ENCODE measurements at regions of chr14 and their contacts with region 1.

Region 1: DNA sequence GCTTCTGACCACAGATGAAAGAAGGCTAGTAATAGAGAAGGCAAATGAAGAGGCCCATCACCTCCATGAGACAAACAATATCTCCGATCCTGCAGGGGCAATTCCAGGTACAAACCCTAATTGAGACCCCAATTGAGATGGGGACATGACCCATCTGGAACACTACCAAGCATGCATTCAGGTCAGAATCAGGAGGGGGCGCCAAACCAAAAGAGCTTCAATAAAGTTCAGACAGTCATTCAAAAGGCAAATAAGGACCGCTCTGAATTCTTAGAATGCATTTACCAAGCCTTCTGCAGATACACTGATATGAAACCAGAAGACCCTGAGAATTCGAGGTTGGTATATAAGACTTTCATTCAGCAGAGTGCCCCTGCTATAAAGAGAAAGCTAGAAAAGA is 10.2 kb upstream of the EDDM3B start:
- DNase-seq: peak; percentile 40 to 59 (median 42)
- ATAC-seq: peak; percentile 83
- H3K4me3 ChIP-seq: no peak overlapping the region
- H3K27ac ChIP-seq: no peak overlapping the region
- H3K4me1 ChIP-seq: no peaks in the 10 kb centered on the region; a peak in 2 of 5 replicates
- H3K27me3 ChIP-seq: no peaks in the 10 kb centered on the region
- CTCF ChIP-seq: peak; percentile 60 to 67 (median 64)
- EP300 ChIP-seq: no peak
- POLR2A ChIP-seq: no peak
- RAD21 ChIP-seq: peak; percentile 45 to 75

Region 2: GRCh38 chr14:20609215-20610001 is 148.6 kb before region 1 on chr14:
- CTCF ChIA-PET with region 1: no interaction called
- POLR2A ChIA-PET with region 1: no interaction called
- in situ Hi-C with region 1: no loop called
- intact Hi-C with region 1: no loop called
- DNase-seq: peak; percentile 59 to 86 (median 65)
- ATAC-seq: peak; percentile 12
- H3K4me3 ChIP-seq: peak overlapping the region; percentile 80
- H3K27ac ChIP-seq: peak overlapping the region; percentile 64
- H3K4me1 ChIP-seq: peaks cover 0 to 14% of the 10 kb centered on the region in 2 experiments; a peak in 2 of 5 replicates
- H3K27me3 ChIP-seq: no peaks in the 10 kb centered on the region
- CTCF ChIP-seq: peak; percentile 93 to 100 (median 99)
- EP300 ChIP-seq: peak; percentile 35
- POLR2A ChIP-seq: no peak
- RAD21 ChIP-seq: peak; percentile 96 to 97

Region 3: DNA sequence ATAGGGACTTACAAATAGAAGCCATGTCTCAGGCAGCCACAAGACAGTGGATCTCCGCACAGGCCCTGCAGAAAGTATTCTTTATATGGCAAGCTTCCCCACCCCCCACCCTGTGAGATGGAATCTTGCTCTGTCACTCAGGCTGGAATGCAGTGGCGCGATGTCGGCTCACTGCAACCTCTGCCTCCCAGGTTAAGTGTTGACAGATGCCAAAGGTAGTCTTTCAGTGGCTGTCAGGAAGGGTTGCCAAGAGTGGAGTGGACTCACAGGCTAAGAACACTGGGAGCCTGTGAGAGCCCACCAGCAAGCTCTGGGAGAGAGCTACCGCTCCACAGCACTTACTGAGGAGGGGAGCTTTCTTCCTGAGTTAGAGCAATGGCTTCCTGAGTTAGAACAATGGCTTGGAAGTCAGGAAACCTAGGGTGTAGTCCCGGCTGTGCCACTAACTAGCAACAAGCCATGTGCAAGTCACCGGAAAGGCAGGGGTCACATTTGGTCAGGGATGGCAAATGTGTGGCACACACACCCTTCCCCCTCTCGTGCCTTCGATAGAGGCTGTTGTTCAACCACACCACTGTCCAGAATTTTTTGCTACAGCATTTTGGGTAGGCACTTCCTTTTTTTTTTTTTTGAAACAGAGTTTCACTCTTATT is 42.1 kb after region 1 on chr14:
- CTCF ChIA-PET with region 1: no interaction called
- POLR2A ChIA-PET with region 1: no interaction called
- in situ Hi-C with region 1: no loop called
- intact Hi-C with region 1: loop called (anchors 2 kb)
- DNase-seq: peak; percentile 23 to 70 (median 38)
- ATAC-seq: peak; percentile 61
- H3K4me3 ChIP-seq: peak overlapping the region; percentile 24
- H3K27ac ChIP-seq: peak overlapping the region; percentile 88
- H3K4me1 ChIP-seq: peaks cover 27 to 66% of the 10 kb centered on the region in 2 experiments
- H3K27me3 ChIP-seq: no peaks in the 10 kb centered on the region
- CTCF ChIP-seq: no peak
- EP300 ChIP-seq: no peak; the same call in 1 of the 2 replicates
- POLR2A ChIP-seq: no peak
- RAD21 ChIP-seq: no peak

Region 4: DNA sequence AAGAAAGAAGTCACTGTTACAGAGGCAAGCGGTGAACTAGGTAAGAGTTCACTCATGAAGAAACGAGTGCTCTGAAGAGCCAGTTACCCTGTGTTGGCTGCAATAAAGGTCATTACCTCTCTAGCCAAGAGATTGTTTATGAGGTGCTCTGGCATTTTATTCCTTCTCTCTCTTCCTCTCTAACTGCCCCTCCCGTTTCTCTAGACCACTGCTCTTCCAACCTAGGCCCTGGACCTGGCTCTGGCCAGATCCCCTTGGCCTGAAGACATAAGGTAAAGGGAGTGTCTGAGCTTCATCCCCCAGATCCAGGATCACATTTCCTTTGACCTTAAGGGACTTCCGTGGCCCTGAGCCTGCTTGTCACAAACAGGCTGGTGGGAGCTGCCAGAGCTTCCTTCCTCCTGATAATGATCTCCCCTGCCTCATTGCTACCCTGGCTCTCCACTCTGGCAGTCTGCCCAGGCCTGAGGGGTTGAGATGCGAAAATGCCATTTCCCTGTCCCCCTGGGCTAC is 286.2 kb after region 1 on chr14:
- CTCF ChIA-PET with region 1: no interaction called
- POLR2A ChIA-PET with region 1: no interaction called
- in situ Hi-C with region 1: no loop called
- intact Hi-C with region 1: no loop called
- DNase-seq: peak in 2 of 4 experiments; percentile 47 to 57
- ATAC-seq: peak; percentile 47
- H3K4me3 ChIP-seq: no peak overlapping the region
- H3K27ac ChIP-seq: peak overlapping the region; percentile 38; the same call in 1 of the 3 replicates
- H3K4me1 ChIP-seq: peaks cover 5 to 18% of the 10 kb centered on the region in 2 experiments; a peak in 4 of 5 replicates
- H3K27me3 ChIP-seq: no peaks in the 10 kb centered on the region
- CTCF ChIP-seq: no peak
- EP300 ChIP-seq: peak; percentile 52
- POLR2A ChIP-seq: no peak
- RAD21 ChIP-seq: no peak